OCI-LY7 (cell line): ENCODE measurements at regions of chr16 and their contacts with region 1.

Region 1: GRCh38 chr16:69132424-69133252 is at the starts of genes CHTF8 and UTP4:
- DNase-seq: peak; percentile 90
- H3K4me3 ChIP-seq: peak within 1 kb of the TSS; percentile 100
- H3K27ac ChIP-seq: peak within 1 kb of the TSS; percentile 77
- H3K4me1 ChIP-seq: peaks cover 27% of the 10 kb centered on the region
- CTCF ChIP-seq: no peak
- total RNA-seq, gene CHTF8: 54.4 and 58.8 TPM in 2 replicates
- total RNA-seq, gene UTP4: 21.1 and 24.9 TPM in 2 replicates

Region 2: GRCh38 chr16:68538880-68539701 is 593.5 kb before region 1 on chr16 and contains the start of gene ZFP90:
- CTCF ChIA-PET with region 1: no interaction called
- POLR2A ChIA-PET with region 1: no interaction called
- intact Hi-C with region 1: loop called (anchors 10 kb)
- DNase-seq: peak; percentile 93
- H3K4me3 ChIP-seq: peak within 1 kb of the TSS; percentile 97
- H3K27ac ChIP-seq: no peak within 1 kb of the TSS
- H3K4me1 ChIP-seq: peaks cover 11% of the 10 kb centered on the region
- CTCF ChIP-seq: no peak
- total RNA-seq, gene ZFP90: 14.1 and 22.0 TPM in 2 replicates

Region 3: GRCh38 chr16:68843482-68844210 is 289.0 kb before region 1 on chr16 and contains the start of gene TANGO6:
- CTCF ChIA-PET with region 1: interaction called, 3 read pairs
- POLR2A ChIA-PET with region 1: no interaction called
- intact Hi-C with region 1: loop called (anchors 2 kb)
- DNase-seq: peak; percentile 91
- H3K4me3 ChIP-seq: peak within 1 kb of the TSS; percentile 76
- H3K27ac ChIP-seq: peak within 1 kb of the TSS; percentile 67
- H3K4me1 ChIP-seq: peaks cover 9% of the 10 kb centered on the region
- CTCF ChIP-seq: peak; percentile 81
- total RNA-seq, gene TANGO6: 17.3 and 22.8 TPM in 2 replicates

Region 4: DNA sequence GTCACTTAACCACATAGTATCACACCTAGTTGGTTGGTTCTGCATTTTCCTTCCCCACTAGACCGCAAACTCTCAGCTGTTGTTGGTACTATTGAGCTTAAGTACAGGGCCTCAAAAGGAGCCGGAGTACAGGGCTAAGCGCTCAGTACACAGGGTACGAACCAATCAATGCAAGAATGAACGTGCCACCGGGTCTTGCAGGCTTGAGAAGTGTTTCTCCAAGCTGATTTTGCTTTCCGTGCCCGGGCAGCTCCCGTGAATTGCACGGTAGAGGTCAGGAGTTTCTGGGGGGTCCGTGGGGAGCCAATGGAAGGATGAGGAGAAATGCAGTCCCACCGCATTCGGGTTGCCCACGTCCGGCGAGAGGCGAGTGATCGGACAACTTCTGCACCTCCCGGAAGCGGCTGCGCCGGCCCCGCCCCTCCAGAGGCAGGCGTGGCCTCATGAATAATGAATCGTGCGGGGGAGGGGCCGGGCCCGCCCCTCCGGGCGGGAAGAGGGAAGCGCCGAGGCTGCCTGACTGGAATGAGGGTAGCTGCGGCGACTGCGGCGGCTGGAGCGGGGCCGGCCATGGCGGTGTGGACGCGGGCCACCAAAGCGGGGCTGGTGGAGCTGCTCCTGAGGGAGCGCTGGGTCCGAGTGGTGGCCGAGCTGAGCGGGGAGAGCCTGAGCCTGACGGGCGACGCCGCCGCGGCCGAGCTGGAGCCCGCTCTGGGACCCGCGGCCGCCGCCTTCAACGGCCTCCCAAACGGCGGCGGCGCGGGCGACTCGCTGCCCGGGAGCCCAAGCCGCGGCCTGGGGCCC is 54.2 kb after region 1 on chr16 and contains the start of gene SNTB2:
- CTCF ChIA-PET with region 1: interaction called, 3 read pairs
- POLR2A ChIA-PET with region 1: no interaction called
- intact Hi-C with region 1: loop called (anchors 1 kb)
- DNase-seq: peak; percentile 90
- H3K4me3 ChIP-seq: peak within 1 kb of the TSS; percentile 79
- H3K27ac ChIP-seq: peak within 1 kb of the TSS; percentile 68
- H3K4me1 ChIP-seq: peaks cover 28% of the 10 kb centered on the region
- CTCF ChIP-seq: no peak
- total RNA-seq, gene SNTB2: 21.2 and 39.4 TPM in 2 replicates

Region 5: DNA sequence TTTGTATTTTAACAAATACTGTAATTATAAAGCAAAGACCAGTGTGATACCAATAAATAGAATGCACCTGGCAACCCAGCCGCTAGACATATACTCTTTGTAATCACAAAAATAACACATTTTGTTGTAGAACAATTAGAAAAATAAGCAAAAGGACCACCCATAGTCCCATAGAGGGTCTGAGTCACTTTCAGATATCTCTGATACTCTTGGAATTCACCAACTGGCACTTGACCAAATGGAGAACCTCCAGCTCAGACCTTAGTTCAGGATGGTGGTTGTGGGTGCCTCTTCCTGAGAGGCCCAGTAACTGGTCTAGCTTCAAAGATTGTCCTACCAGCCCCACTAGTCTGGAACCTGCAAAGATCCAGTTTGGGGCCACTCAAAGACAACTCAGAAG is 254.0 kb after region 1 on chr16:
- CTCF ChIA-PET with region 1: no interaction called
- POLR2A ChIA-PET with region 1: no interaction called
- intact Hi-C with region 1: loop called (anchors 5 kb)
- DNase-seq: no peak
- H3K4me3 ChIP-seq: peak overlapping the region; percentile 97
- H3K27ac ChIP-seq: no peak overlapping the region
- H3K4me1 ChIP-seq: peaks cover 27% of the 10 kb centered on the region
- CTCF ChIP-seq: no peak